Heart right ventricle (tissue), 16 donors: ENCODE measurements at regions of chr1 and their contacts with region 1.

Region 1: DNA sequence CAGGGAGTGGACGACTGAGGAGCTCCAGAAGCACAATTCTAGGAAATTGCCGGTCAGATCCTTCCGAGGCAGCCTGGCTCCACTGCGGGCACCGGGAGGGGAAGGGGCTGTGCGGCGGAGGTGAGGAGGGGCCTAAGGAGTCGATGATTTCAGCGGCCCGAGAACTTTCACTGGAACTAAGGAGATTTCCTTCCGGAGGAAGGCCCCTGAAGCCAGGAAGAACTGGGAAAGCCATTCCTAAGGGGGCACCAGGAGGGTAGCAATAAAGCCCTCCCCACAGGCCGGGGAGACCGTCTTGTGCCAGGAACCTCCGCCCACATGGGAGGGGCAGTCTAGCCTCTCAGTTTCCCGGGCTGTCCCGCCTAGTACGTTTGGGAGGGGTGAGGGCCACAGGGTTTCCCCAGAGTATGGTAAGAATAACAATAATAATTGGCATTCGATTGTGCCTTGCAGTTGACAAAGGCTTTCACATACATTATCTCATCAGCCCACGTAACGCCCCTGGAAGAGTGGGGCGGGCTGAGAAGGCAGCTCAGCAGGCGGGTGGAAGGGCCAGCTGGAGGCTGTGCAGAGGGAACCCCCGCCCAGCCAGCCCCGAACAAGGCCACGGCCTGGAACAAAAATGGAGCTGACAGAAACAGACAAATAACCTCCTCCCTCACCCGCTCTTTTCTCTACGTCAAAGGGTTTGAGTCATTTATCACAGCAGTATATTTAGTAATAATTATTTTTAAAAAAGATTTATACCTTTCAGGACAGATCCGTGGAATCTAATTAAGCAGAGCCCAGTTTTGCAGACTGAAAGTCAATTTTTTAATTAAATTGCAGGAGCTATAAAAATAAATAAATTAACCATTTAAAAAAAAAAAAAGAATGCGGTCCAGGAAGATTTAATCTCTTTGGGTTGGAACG is 19.8 kb downstream of the NPR1 start:
- DNase-seq: peak; percentile 77 to 81
- ATAC-seq: peak; percentile 87 to 96 (median 90)
- H3K4me3 ChIP-seq: peak overlapping the region in 7 of 10 donors; percentile 1 to 26 (median 19)
- H3K27ac ChIP-seq: peak overlapping the region; percentile 82 to 96 (median 89)
- H3K4me1 ChIP-seq: peaks cover 11 to 36% (median 30%) of the 10 kb centered on the region in 9 donors
- H3K27me3 ChIP-seq: no peaks in the 10 kb centered on the region
- CTCF ChIP-seq: no peak

Region 2: DNA sequence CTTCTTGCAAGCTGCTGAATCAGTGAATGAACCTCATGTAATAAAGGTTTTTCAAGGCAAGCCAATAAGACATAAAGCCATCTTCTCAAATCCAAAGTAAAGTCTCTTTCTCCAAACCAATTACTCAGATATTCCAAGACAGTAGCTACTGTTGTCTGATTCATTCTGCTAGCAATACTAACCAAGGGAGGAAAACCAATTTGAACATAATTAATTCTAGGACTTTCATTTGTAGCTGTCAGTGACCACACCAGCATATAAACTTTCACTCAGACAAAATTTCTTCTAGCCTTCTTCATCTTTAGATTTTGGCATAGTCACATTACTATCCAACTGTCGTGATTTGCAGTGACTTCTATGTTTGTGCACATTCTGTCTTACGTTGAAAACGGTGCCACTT is 19.1 kb after region 1 on chr1:
- intact Hi-C with region 1: loop called in 1 of 10 experiments (anchors 2 kb)
- DNase-seq: no peak
- ATAC-seq: no peak
- H3K4me3 ChIP-seq: no peak overlapping the region
- H3K27ac ChIP-seq: no peak overlapping the region
- H3K4me1 ChIP-seq: no peaks in the 10 kb centered on the region
- H3K27me3 ChIP-seq: no peaks in the 10 kb centered on the region
- CTCF ChIP-seq: no peak

Region 3: DNA sequence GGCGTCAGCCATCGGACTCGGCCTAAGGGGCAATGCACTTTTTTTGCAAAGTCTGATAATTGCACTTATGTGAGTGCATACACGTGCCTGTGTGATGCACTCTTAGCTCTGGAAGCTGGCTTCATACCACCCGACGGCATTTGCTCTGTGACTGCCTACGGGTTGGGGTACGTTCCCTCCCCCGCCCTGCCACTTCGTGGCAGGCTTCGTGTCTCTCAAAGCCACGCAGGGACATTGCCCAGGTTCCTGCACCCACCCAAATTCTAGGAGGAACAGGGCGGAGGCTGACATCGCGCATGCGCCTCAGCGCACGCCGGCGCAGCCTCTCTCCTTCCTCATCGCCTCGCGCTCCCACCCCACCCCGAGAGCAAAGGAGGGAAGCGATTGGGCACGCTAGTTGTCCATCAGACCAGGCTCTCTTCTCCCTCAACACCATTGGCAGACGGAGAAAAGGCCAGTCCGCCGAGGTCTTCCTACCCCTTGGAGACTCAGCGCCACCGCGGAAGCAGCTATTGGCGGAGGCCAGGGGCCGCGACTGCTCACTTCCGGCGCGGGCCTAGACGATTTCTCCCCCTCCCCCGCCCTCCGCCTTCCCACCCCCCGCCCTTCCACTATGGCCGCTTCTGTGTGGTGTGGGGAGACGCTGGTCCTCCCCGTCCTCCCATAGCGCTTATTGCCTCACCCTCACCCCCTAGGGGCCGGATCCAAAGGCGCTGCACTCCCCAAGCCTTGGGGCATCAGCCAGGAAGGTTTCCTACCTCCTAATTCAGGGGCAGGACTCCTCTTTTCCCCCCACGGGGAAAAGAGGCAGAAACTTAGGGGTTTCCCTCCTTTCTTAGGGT is 29.4 kb after region 1 on chr1 and contains the start of gene INTS3:
- intact Hi-C with region 1: loop called in 1 of 10 experiments (anchors 2 kb)
- DNase-seq: peak; percentile 99 to 100
- ATAC-seq: peak; percentile 99 to 100 (median 100)
- H3K4me3 ChIP-seq: peak within 1 kb of the TSS; percentile 48 to 92 (median 78)
- H3K27ac ChIP-seq: peak within 1 kb of the TSS; percentile 96 to 100 (median 99)
- H3K4me1 ChIP-seq: peaks cover 0 to 36% (median 30%) of the 10 kb centered on the region in 9 donors
- H3K27me3 ChIP-seq: no peaks in the 10 kb centered on the region
- CTCF ChIP-seq: peak in 3 of 9 donors; percentile 8 to 22 (median 15)
- total RNA-seq, gene INTS3: 25.4 to 32.8 (median 31.1) TPM

Region 4: DNA sequence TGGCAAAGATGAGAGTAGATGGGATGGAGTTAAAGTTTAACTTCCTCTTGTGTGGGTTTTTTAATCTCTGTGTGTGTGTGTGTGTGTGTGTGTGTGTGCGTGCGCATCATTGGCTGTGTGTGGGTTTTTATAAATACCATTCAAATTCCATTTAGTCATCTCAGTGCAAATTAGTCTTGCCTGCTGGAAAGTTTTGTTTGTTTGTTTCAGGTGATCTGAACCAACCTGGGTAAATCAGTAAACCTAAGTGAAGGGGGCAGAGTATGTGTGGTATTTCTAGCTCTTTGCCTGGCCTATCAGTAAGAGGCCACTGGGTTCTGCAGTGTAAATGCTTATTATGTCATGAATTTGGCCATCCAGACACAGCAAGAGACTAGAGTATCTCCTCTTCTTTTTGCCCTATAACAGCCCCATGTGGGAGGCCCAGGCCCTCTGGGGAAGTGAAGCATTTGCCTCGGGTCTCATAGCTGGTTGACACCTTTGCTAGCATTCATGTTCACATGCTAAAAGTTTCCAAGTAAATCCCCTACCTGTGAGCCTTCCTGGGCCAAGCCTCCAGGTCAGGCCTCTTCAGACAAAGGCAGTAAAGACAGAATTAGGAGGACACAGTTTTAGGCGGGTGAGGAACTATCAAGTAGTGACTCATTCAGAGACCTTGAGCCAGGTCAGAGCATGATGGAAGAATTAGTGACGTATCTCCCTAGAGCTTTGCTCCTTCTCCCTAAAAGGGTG is 44.3 kb after region 1 on chr1:
- intact Hi-C with region 1: no loop called
- DNase-seq: no peak
- ATAC-seq: peak in 1 of 8 donors; percentile 72
- H3K4me3 ChIP-seq: no peak overlapping the region
- H3K27ac ChIP-seq: peak overlapping the region in 2 of 10 donors; percentile 8 to 9
- H3K4me1 ChIP-seq: peaks cover 0 to 29% (median 3%) of the 10 kb centered on the region in 9 donors
- H3K27me3 ChIP-seq: no peaks in the 10 kb centered on the region
- CTCF ChIP-seq: no peak

Region 5: GRCh38 chr1:153775458-153776327 is 77.4 kb after region 1 on chr1:
- intact Hi-C with region 1: loop called in 1 of 10 experiments (anchors 5 kb)
- DNase-seq: peak; percentile 71 to 73
- ATAC-seq: peak; percentile 23 to 46 (median 36)
- H3K4me3 ChIP-seq: peak overlapping the region; percentile 54 to 94 (median 85)
- H3K27ac ChIP-seq: peak overlapping the region; percentile 72 to 92 (median 86)
- H3K4me1 ChIP-seq: peaks cover 27 to 92% (median 76%) of the 10 kb centered on the region in 9 donors
- H3K27me3 ChIP-seq: no peaks in the 10 kb centered on the region
- CTCF ChIP-seq: peak in 1 of 9 donors; percentile 7